GM10248 (cell line): ENCODE measurements at regions of chr6 and their contacts with region 1.

Region 1: DNA sequence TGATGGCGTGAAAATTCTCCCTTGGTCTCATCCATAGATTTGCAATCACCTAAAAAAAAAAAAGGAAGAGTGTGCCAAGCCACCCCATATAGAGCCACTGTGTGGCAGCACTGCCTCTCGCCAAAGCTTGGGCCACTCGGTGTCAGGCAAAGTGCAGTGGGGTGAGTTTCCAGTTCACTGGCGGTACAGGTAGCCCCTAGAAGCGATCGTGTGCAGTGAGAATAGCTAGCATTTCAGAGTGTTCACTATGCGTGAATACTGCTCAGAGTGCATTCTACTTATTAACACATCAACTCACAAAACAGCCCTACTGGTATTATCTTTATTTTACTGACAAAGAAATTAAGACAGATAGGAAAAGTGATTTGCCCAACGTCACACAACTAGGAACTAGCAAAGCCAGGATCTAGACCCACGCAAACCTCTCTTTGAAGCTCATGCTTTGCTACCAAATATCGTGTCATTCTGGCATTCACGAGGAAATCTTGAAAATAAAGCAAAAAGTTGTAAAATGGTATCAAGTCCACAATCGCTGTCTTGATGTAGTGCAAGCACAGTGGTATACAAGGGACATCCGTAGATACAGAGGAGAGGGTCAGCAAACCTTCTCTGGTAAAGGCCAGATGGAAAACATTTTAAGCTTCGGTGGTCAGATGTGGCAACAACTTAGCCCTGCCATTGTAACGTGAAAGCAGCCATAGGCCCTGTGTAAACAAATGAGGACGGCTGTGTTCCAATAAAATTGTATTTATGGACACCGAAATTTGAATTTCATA is 10.4 kb upstream of the GCNT2 start:
- DNase-seq: peak; percentile 77
- CTCF ChIP-seq: peak; percentile 65

Region 2: DNA sequence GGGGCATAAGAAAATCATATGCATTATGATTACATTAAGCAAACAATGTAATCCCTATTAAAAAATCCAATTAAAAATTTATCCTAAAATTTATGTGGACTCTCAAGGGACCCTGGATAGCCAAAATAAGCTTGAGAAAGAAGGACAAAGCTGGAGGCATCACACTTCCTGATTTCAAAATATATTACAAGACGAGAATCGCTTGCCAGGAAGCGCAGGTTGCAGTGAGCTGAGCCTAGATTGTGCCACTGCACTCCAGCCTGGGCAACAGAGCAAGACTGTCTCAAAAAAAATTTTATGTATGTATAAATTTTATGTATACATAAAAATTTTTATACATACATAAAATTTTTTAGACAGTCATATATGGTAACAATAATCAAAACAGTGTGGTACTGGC is 38.1 kb before region 1 on chr6:
- CTCF ChIA-PET with region 1: no interaction called
- POLR2A ChIA-PET with region 1: no interaction called
- DNase-seq: no peak
- CTCF ChIP-seq: no peak

Region 3: DNA sequence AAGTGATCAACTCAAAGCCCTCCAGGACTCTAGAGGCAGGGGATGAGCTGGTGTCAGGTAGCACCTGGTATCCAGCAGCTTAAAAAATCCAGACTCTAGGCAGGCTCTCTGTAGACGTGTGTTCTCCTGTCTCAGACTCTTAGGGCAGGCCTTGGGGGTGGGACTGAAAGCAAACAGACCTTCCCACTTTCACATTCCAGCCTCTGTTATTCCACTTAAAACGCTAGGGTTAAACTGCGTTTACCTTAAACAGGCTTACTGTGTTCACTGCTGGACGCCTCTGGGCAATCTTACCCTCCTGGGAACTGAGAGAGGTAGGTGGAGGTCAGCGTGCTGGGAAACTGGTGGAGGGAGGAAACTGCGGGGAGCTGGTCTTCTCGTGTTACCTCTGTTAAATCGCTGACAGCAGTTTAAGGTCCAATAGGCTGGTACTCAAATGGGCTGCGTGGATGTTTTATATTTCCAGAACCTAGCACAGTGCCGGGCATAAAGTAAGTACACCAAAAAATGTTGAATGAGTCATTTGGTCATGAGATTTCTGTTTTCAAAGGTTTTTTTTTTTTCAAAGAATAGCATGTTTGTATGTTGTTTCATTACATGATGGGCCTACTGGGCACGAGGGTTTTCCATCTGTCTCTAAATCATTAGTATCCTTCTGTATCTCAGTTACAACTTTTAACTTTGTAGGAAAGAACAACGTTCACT is 10.5 kb after region 1 on chr6 and contains the start of gene GCNT2:
- CTCF ChIA-PET with region 1: interaction called, 23 read pairs
- POLR2A ChIA-PET with region 1: no interaction called
- DNase-seq: peak; percentile 32
- CTCF ChIP-seq: no peak

Region 4: DNA sequence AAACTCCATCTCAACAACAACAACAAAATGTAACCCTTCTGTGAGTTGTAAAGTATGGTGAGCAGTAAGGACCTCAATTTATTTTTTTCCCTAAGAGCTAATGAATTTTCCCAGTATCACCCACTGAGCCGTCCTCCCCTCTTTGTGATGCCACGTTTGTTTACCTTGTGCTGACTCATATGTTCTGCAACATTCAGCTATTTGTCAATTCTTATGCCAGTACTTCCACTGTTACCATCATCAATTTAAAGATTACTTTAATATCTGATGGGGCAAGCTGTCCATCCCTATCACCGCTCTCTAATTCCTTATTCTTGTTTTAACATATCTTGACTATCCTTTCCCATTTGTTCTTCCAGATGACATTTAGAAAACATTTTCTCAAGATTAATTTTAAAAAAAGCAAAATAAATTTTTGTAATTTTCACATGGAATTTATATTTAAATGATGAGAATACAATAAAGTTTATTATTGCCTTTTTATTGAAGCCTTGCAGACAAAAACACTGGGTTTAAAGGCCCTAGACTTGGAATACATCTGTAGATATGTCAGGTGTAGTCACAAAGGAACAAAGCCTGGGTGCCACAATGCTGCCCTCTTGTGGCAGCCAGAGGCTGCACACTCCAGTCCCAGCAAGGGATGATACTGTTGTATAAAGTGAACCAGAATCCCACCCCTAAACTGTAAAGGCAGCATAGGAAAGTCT is 290.2 kb after region 1 on chr6:
- CTCF ChIA-PET with region 1: interaction called, 60 read pairs
- POLR2A ChIA-PET with region 1: no interaction called
- DNase-seq: peak; percentile 81
- CTCF ChIP-seq: peak; percentile 92